ENCODE measurements at regions of chr11 and their contacts with region 1.

Region 1: DNA sequence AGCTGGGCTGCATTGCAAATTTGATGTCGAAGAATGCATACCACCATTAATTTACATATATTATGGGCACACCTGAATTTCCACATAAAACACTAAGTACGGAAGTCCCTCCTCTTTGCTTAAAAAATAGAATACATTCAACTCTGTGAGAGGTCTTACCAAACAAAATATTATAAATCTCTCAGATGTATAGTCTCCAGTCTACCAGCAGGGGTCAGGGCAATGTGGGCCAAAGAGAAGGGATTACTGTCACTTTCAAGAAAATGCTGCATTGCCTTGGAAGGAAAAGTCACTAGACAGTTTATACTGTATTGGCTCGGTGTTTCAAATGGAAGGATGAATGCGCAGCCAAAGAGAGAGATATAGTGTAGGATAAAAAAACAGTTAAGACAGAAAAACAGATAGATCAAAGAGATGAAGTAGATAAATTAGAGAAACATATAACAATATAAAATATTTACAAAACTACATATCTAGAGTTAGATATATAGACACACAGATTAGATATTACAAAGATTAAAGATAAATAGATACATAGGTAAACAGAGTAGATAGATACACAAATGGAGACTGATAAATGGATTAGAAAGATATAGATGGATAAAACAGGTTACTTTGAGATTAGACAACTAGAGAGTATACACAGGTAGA is 20.9 kb downstream of the SERGEF start:
- ATAC-seq: peak in 7 of 8 experiments; percentile 20 to 96 (median 67)
- H3K4me3 ChIP-seq: no peak overlapping the region
- H3K27ac ChIP-seq: no peak overlapping the region
- H3K4me1 ChIP-seq: no peaks in the 10 kb centered on the region

Region 2: GRCh38 chr11:17384002-17384511 is 607.9 kb before region 1 on chr11:
- in situ Hi-C with region 1: loop called in 1 of 9 experiments (anchors 25 kb)
- ATAC-seq: peak; percentile 38 to 69 (median 56)
- H3K4me3 ChIP-seq: no peak overlapping the region
- H3K27ac ChIP-seq: no peak overlapping the region
- H3K4me1 ChIP-seq: no peaks in the 10 kb centered on the region

Region 3: GRCh38 chr11:17598700-17599459 is 393.0 kb before region 1 on chr11:
- in situ Hi-C with region 1: loop called in 3 of 9 experiments (anchors 25 kb)
- ATAC-seq: peak; percentile 86 to 97 (median 95)
- H3K4me3 ChIP-seq: no peak overlapping the region
- H3K27ac ChIP-seq: no peak overlapping the region
- H3K4me1 ChIP-seq: peaks cover 0 to 8% of the 10 kb centered on the region in 2 donors

Region 4: DNA sequence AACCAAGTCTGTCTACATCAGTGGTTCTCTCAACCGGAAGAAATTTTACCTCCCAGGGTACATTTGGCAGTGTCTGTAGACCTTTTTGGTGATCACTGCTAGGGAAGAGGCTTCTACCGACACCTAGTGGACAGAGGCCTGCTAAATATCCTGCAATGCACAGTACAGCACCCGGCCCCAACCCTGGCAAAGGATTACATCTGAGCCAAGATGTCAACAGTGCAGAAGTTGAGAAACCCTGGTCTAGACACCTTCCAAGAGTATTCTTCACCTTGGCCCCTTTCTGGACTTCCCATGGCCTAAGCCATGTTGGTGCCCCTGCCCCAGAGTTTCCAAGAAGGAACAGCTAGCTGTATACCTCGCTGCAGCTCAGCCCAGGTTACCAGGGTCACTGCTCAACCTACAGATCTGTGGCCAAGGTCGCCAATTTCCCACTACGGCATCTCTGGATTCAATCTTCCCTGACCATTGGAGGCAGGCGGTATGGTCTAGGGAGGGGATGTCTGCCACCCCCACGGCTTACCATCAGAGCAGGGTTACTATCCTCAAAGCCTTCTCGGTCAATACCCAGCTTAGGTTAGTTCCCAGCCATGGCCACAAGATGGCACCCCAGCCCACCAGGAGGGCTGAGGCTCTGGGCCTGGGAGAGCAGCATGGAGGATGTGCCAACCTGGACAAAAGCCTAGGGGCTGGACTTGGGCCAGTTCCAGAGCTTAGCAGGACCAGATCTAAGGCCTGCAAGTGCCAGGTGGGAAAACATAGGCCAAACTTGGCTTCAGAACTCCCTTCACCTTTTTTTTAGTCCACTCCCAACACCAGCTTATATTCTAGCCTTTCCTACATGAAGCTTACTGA is 261.1 kb before region 1 on chr11:
- in situ Hi-C with region 1: loop called in 4 of 9 experiments (anchors 10 to 25 kb)
- ATAC-seq: peak; percentile 54 to 73 (median 65)
- H3K4me3 ChIP-seq: no peak overlapping the region
- H3K27ac ChIP-seq: no peak overlapping the region
- H3K4me1 ChIP-seq: peaks cover 0 to under 1% of the 10 kb centered on the region in 2 donors